Activated B cell treated with CpG ODN at 0.5 μM for 24 hours (primary cell): ENCODE measurements at regions of chrX and their contacts with region 1.

Region 1: GRCh38 chrX:132631579-132632232 is 142.9 kb upstream of the MBNL3 start:
- DNase-seq: no peak
- ATAC-seq: peak; percentile 34
- H3K4me3 Mint-ChIP-seq: no peak overlapping the region
- H3K27ac Mint-ChIP-seq: no peak overlapping the region
- H3K4me1 Mint-ChIP-seq: no peaks in the 10 kb centered on the region
- H3K27me3 Mint-ChIP-seq: no peaks in the 10 kb centered on the region
- CTCF ChIP-seq: no peak

Region 2: DNA sequence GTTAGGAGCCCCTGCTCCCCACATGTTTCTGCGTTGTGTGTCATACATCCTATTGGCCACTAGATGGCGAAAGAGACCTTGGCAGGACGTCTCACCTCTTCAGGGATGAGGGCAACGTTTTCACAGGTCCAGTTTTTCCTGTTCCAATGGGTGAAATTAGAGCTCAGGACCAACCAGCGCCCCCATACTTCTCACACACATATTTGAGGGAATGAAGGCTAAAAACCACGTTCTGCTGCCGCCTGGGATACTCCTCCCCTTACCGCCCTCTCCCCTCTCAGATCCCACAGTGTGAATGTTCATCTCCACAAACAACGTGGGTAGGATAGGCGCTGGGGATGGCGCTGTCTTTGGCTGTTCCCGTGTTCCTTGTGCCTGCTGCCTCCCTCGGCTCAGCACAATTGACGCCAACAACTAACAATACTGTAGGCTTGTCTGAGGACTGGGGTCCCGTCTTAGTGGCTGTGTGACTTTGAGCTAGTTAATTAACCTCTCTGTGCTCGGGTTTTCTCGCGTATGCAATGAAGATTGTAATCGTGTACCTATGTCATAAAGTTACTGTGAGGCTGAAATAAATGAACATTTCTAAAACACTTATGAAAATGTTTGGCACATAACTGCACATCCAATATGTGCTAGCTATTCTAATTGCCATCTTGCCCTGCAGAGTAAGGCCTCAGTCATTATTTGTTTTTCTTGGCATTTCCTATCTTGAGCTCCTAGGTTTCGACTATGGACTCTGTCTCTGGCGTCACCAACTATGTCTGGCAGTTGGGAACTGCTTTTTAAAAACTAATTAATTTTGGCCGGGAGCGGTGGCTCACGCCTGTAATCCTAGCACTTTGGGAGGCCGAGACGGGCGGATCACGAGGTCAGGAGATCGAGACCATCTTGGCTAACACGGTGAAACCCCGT is 790.0 kb before region 1 on chrX:
- CTCF ChIA-PET with region 1: interaction called, 11 read pairs
- POLR2A ChIA-PET with region 1: no interaction called
- intact Hi-C with region 1: loop called (anchors 1 kb)
- DNase-seq: no peak
- ATAC-seq: peak; percentile 70
- H3K4me3 Mint-ChIP-seq: no peak overlapping the region
- H3K27ac Mint-ChIP-seq: no peak overlapping the region
- H3K4me1 Mint-ChIP-seq: peaks cover 3% of the 10 kb centered on the region
- H3K27me3 Mint-ChIP-seq: no peaks in the 10 kb centered on the region
- CTCF ChIP-seq: no peak

Region 3: DNA sequence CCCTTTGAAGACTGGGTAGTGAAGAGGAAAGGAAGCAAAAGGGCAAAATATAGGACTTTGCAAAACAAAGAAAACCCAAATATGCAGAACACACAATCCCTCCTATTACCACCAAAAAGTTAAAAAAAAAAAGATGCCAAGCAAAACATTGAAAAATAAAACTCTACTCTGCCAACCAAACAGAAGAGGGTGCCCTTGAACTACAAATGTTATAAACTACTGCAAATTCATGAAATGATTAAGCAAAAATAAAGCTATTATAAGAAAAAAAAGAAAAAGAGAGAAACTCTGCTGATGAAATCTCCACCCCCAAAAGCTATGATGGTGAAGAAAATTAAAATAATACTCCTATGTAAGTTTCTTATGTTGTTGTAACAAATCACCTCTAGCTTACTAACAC is 777.1 kb before region 1 on chrX:
- CTCF ChIA-PET with region 1: interaction called, 10 read pairs
- POLR2A ChIA-PET with region 1: no interaction called
- intact Hi-C with region 1: no loop called
- DNase-seq: no peak
- ATAC-seq: no peak
- H3K4me3 Mint-ChIP-seq: no peak overlapping the region
- H3K27ac Mint-ChIP-seq: no peak overlapping the region
- H3K4me1 Mint-ChIP-seq: no peaks in the 10 kb centered on the region
- H3K27me3 Mint-ChIP-seq: no peaks in the 10 kb centered on the region
- CTCF ChIP-seq: no peak

Region 4: DNA sequence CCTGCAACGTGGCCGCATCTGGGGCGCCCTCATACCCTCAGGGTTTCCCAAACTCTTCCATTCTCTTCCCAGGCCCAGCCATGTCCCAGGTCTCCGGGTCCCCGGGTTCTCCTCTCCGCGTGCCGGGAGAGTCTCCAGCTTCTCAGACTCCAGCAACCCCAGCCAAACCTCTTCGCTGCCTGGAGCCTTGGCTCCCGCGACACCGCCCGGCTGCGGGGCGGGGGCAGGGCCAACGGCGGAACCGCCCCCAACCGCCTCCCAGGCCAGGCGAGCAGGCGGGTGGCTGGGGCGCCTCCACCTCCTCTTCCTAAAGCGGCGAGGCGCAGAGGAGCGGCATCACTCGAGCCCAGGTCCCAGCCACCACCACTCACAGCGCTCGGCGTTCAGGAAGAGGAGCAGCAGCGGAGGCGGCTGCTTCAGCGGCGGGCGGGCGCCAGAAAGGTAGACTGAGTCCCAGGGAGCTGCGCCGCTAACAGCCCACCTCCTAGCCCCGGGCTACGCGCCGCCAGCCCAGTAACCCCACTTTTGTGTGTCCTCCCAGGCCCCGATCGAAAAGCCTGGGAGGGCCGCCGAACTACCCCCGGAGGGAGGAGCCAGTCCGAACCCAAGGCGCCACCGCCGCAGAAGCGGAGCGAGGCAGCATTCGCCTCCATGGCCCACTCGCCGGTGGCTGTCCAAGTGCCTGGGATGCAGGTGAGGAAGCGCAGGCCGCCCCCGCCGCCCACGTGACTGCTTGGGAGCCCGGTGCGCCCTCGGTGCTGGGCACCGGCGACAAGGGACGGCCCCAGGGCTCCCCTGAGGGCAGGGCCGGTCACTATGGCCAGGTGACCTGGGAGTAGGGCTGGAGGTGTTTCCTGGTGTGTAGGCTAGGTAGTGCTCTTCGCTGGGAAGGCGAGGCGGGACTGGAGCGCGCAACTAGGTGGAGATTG is 608.5 kb before region 1 on chrX and contains the start of gene STK26:
- CTCF ChIA-PET with region 1: no interaction called
- POLR2A ChIA-PET with region 1: no interaction called
- intact Hi-C with region 1: no loop called
- DNase-seq: peak; percentile 64
- ATAC-seq: peak; percentile 84
- H3K4me3 Mint-ChIP-seq: peak within 1 kb of the TSS; percentile 90
- H3K27ac Mint-ChIP-seq: peak within 1 kb of the TSS; percentile 84
- H3K4me1 Mint-ChIP-seq: peaks cover 31% of the 10 kb centered on the region
- H3K27me3 Mint-ChIP-seq: no peaks in the 10 kb centered on the region
- CTCF ChIP-seq: no peak
- total RNA-seq, gene STK26: 19.9 and 20.7 TPM in 2 replicates

Region 5: GRCh38 chrX:132092439-132093065 is 539.2 kb before region 1 on chrX:
- CTCF ChIA-PET with region 1: interaction called, 3 read pairs
- POLR2A ChIA-PET with region 1: no interaction called
- intact Hi-C with region 1: loop called (anchors 1 kb)
- DNase-seq: no peak
- ATAC-seq: peak; percentile 58
- H3K4me3 Mint-ChIP-seq: no peak overlapping the region
- H3K27ac Mint-ChIP-seq: no peak overlapping the region
- H3K4me1 Mint-ChIP-seq: peaks cover 3% of the 10 kb centered on the region
- H3K27me3 Mint-ChIP-seq: peaks cover 2% of the 10 kb centered on the region
- CTCF ChIP-seq: no peak

Region 6: DNA sequence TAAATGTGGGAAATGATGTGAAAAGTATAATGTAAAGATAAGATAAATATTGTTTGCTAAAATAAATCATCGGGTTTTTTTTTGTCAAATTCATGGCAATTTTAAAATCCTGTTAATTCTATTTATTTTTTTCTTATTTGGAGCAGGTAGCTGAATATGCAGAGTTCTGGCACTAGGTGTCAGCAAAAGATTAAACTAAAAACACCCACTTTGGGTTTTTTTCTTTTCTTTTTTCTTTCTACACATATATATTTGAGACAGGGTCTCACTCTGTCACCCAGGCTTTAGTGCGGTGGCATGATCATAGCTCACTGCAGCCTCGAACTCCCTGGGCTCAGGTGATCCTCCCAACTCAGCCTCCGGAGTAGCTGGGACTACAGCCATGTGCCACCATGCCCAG is 405.5 kb before region 1 on chrX:
- CTCF ChIA-PET with region 1: interaction called, 14 read pairs
- POLR2A ChIA-PET with region 1: no interaction called
- intact Hi-C with region 1: loop called (anchors 1 kb)
- DNase-seq: no peak
- ATAC-seq: no peak
- H3K4me3 Mint-ChIP-seq: no peak overlapping the region
- H3K27ac Mint-ChIP-seq: no peak overlapping the region
- H3K4me1 Mint-ChIP-seq: peaks cover under 1% of the 10 kb centered on the region
- H3K27me3 Mint-ChIP-seq: no peaks in the 10 kb centered on the region
- CTCF ChIP-seq: no peak

Region 7: GRCh38 chrX:132292793-132293192 is 338.9 kb before region 1 on chrX:
- CTCF ChIA-PET with region 1: interaction called, 14 read pairs
- POLR2A ChIA-PET with region 1: no interaction called
- intact Hi-C with region 1: loop called (anchors 1 kb)
- DNase-seq: no peak
- ATAC-seq: peak; percentile 42
- H3K4me3 Mint-ChIP-seq: no peak overlapping the region
- H3K27ac Mint-ChIP-seq: no peak overlapping the region
- H3K4me1 Mint-ChIP-seq: no peaks in the 10 kb centered on the region
- H3K27me3 Mint-ChIP-seq: no peaks in the 10 kb centered on the region
- CTCF ChIP-seq: no peak

Region 8: GRCh38 chrX:132877954-132878536 is 246.3 kb after region 1 on chrX:
- CTCF ChIA-PET with region 1: no interaction called
- POLR2A ChIA-PET with region 1: no interaction called
- intact Hi-C with region 1: no loop called
- DNase-seq: no peak
- ATAC-seq: no peak
- H3K4me3 Mint-ChIP-seq: no peak overlapping the region
- H3K27ac Mint-ChIP-seq: no peak overlapping the region
- H3K4me1 Mint-ChIP-seq: no peaks in the 10 kb centered on the region
- H3K27me3 Mint-ChIP-seq: no peaks in the 10 kb centered on the region
- CTCF ChIP-seq: no peak

Region 9: GRCh38 chrX:133670383-133670782 is 1038.7 kb after region 1 on chrX:
- CTCF ChIA-PET with region 1: no interaction called
- POLR2A ChIA-PET with region 1: no interaction called
- intact Hi-C with region 1: loop called (anchors 5 kb)
- DNase-seq: no peak
- ATAC-seq: no peak
- H3K4me3 Mint-ChIP-seq: no peak overlapping the region
- H3K27ac Mint-ChIP-seq: no peak overlapping the region
- H3K4me1 Mint-ChIP-seq: no peaks in the 10 kb centered on the region
- H3K27me3 Mint-ChIP-seq: no peaks in the 10 kb centered on the region
- CTCF ChIP-seq: no peak